CD8-positive, alpha-beta T cell (primary cell): ENCODE measurements at regions of chr17 and their contacts with region 1.

Region 1: DNA sequence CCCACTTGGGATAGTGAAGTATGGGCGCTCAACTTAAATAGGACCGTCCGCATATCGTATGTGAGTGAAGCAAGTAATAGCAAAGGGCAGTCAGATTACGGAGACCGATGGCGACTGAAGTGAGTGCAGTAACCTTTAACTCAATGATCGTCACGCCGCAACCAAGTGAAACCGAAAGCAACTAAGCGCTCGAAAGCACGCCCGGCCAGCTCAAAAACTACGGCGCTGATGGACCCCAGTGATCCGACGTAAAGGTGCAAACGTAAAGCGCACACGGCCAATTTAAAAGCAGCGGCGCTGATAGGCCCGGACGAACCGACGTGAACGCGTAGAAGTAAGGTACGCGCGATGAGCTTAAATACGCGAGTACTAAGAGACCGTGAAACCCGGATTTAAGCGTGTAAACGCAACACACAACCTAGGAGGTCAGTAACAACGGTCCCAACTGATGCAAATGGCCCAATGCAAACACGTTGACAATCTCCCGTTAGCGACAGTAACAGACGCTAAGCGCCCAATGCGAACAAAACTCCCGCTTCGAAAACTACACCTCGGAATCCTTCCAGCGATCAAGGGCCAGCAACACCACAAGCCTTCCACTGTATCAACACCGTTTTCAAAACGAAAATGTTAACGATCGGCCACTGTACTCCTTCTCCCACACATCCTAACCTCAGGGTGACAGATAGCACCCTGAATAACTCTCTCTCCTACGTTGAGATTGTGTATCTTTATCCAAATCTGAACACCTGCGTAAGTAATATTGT is 37.9 kb upstream of the ARL4D start:
- DNase-seq: peak; percentile 80 to 98 (median 94)
- ATAC-seq: peak; percentile 76
- H3K4me3 ChIP-seq: peak overlapping the region; percentile 60 to 64
- H3K4me3 Mint-ChIP-seq: peak overlapping the region; percentile 86
- H3K27ac ChIP-seq: peak overlapping the region; percentile 92 to 100
- H3K27ac Mint-ChIP-seq: peak overlapping the region; percentile 100
- H3K4me1 ChIP-seq: peaks cover 13% of the 10 kb centered on the region
- H3K4me1 Mint-ChIP-seq: peaks cover 35% of the 10 kb centered on the region
- H3K27me3 ChIP-seq: no peaks in the 10 kb centered on the region
- H3K27me3 Mint-ChIP-seq: no peaks in the 10 kb centered on the region
- CTCF ChIP-seq: no peak

Region 2: GRCh38 chr17:42953669-42954068 is 407.3 kb before region 1 on chr17:
- CTCF ChIA-PET with region 1: no interaction called
- POLR2A ChIA-PET with region 1: no interaction called
- intact Hi-C with region 1: no loop called
- DNase-seq: no peak
- ATAC-seq: no peak
- H3K4me3 ChIP-seq: no peak overlapping the region
- H3K4me3 Mint-ChIP-seq: no peak overlapping the region
- H3K27ac ChIP-seq: no peak overlapping the region
- H3K27ac Mint-ChIP-seq: peak overlapping the region; percentile 30
- H3K4me1 ChIP-seq: no peaks in the 10 kb centered on the region
- H3K4me1 Mint-ChIP-seq: no peaks in the 10 kb centered on the region
- H3K27me3 ChIP-seq: no peaks in the 10 kb centered on the region
- H3K27me3 Mint-ChIP-seq: no peaks in the 10 kb centered on the region
- CTCF ChIP-seq: no peak

Region 3: DNA sequence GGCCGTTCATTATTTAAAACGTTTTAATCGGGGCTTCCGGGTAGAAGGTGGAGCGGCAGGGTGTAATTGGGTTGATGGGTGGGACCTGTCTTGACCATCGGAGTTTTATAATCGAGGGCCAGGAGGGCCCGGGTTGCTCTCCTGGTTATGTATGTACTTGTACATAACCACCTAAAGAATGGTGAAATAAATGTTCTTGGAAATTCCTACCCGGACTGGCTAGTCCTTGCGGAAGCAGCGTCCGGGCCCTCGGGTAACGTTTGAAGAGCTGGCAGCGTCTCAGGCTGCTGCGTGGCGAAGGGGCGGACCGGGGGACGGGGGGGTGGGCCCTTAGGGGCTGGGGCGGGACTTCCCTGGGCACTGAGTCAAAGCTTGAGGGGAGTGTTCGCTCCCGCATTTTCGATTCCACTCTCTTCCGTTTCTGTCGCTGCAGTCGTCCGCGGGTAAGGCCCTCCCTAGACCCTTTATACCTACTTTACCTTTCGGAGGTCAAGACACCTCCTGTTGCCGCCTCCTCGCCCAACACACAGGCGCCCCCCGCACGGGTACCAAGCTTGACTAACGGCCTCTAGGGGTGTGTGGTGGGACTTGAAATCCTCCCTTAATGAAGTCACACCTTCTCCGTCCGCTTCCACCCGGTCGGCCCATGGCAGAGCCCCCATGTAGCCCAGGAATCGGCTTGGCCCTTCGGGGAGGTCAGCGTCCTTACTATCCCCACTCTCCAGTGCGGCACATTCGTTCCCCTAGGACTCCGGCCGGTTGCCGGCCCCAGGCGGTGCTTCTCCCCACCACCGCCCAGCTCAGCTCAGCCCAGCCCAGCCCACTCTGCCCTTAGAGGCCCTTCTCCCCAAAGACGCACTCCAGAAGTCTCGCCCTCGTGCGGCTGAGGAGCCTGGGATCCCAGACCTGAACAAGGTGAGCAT is 149.2 kb before region 1 on chr17 and contains the start of gene TMEM106A:
- CTCF ChIA-PET with region 1: no interaction called
- POLR2A ChIA-PET with region 1: interaction called, 16 read pairs
- intact Hi-C with region 1: no loop called
- DNase-seq: peak; percentile 50 to 89 (median 76)
- ATAC-seq: peak; percentile 92
- H3K4me3 ChIP-seq: peak within 1 kb of the TSS; percentile 82 to 95
- H3K4me3 Mint-ChIP-seq: peak within 1 kb of the TSS; percentile 98
- H3K27ac ChIP-seq: peak within 1 kb of the TSS; percentile 75 to 82
- H3K27ac Mint-ChIP-seq: peak within 1 kb of the TSS; percentile 96
- H3K4me1 ChIP-seq: peaks cover 25% of the 10 kb centered on the region
- H3K4me1 Mint-ChIP-seq: peaks cover 40% of the 10 kb centered on the region
- H3K27me3 ChIP-seq: no peaks in the 10 kb centered on the region
- H3K27me3 Mint-ChIP-seq: no peaks in the 10 kb centered on the region
- CTCF ChIP-seq: peak; percentile 58
- total RNA-seq, gene TMEM106A: 8.9 to 9.2 TPM

Region 4: GRCh38 chr17:43309505-43310332 is 51.2 kb before region 1 on chr17:
- CTCF ChIA-PET with region 1: interaction called, 10 read pairs
- POLR2A ChIA-PET with region 1: interaction called, 126 read pairs
- intact Hi-C with region 1: no loop called
- DNase-seq: peak in 4 of 9 experiments; percentile 9 to 45 (median 31)
- ATAC-seq: no peak
- H3K4me3 ChIP-seq: no peak overlapping the region
- H3K4me3 Mint-ChIP-seq: no peak overlapping the region
- H3K27ac ChIP-seq: no peak overlapping the region
- H3K27ac Mint-ChIP-seq: no peak overlapping the region
- H3K4me1 ChIP-seq: no peaks in the 10 kb centered on the region
- H3K4me1 Mint-ChIP-seq: no peaks in the 10 kb centered on the region
- H3K27me3 ChIP-seq: no peaks in the 10 kb centered on the region
- H3K27me3 Mint-ChIP-seq: no peaks in the 10 kb centered on the region
- CTCF ChIP-seq: no peak

Region 5: DNA sequence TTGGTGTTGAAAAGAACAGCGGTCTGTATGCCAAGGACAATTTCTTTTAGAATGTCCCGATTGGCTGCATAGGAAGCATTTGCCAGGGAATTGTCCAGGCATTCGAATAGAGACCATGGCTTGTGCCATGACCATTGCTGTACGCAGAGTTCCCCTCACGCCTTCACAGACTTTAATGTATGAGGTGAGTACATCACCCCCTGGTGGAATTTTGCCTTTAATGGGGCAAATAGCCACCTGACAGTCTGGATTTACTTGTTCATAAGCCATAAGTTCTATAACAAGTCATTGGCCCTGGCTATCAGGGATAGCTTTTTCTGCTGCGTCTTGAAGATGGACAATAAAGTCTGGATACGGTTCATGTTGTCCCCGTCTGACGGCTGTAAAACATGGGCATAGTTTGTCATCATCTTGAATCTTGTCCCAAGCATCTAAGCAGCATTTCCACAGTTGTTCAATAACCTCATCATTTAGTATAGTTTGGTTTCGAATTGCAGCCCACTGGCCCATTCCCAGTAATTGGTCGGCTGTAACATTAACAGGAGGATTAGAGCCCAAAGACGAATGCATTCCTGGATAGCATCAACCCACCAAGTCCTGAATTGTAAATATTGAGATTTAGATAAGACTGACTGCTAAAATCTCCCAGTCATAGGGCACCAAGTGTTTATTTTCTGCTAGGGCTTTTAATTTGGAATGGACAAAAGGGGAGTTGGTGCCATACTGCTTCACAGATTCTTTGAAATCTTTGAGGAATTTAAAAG is 29.9 kb before region 1 on chr17:
- CTCF ChIA-PET with region 1: interaction called, 28 read pairs
- POLR2A ChIA-PET with region 1: interaction called, 5 read pairs
- intact Hi-C with region 1: no loop called
- DNase-seq: no peak
- ATAC-seq: no peak
- H3K4me3 ChIP-seq: no peak overlapping the region
- H3K4me3 Mint-ChIP-seq: no peak overlapping the region
- H3K27ac ChIP-seq: no peak overlapping the region
- H3K27ac Mint-ChIP-seq: no peak overlapping the region
- H3K4me1 ChIP-seq: peaks cover 7% of the 10 kb centered on the region
- H3K4me1 Mint-ChIP-seq: peaks cover 7% of the 10 kb centered on the region
- H3K27me3 ChIP-seq: no peaks in the 10 kb centered on the region
- H3K27me3 Mint-ChIP-seq: peaks cover 15% of the 10 kb centered on the region
- CTCF ChIP-seq: no peak

Region 6: DNA sequence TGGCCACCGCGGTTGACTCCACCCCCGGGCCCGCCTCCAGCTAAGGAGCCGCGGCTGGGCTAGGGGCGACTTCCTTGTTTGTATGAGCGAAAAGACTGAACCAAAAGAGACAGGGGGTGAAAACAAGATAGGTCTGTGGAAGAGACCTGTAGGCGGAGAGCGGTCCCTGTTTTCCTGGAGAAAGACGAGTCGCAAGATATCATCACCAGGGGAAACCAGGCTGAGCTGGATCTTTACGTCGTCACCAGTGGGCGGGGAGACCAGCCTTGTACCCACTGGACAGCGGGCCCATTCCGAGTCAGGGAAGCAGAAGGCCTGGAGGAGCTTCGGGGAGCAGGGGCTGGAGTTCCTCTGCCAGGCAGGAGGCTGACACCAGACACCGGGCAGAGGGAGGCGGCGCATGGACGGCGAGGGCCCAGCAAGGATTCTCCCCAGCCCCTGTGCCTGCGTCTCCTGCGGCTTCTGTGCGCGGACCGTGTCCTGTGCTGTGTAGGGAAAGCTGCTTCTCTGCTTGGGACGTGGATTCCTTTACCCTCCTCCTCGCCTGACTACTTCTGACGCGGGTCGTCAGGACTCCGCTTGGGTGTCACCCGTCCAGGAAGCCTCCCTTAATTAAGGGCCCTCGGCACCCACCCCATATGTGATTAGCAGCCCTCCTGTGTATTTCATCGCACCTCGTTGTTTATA is 27.6 kb after region 1 on chr17:
- CTCF ChIA-PET with region 1: interaction called, 24 read pairs
- POLR2A ChIA-PET with region 1: interaction called, 208 read pairs
- intact Hi-C with region 1: loop called (anchors 1 kb)
- DNase-seq: peak; percentile 88 to 96 (median 90)
- ATAC-seq: peak; percentile 71
- H3K4me3 ChIP-seq: peak overlapping the region; percentile 74 to 94
- H3K4me3 Mint-ChIP-seq: peak overlapping the region; percentile 89
- H3K27ac ChIP-seq: peak overlapping the region; percentile 94 to 96
- H3K27ac Mint-ChIP-seq: peak overlapping the region; percentile 97
- H3K4me1 ChIP-seq: peaks cover 14% of the 10 kb centered on the region
- H3K4me1 Mint-ChIP-seq: peaks cover 37% of the 10 kb centered on the region
- H3K27me3 ChIP-seq: no peaks in the 10 kb centered on the region
- H3K27me3 Mint-ChIP-seq: no peaks in the 10 kb centered on the region
- CTCF ChIP-seq: no peak